Heart right ventricle (tissue), 16 donors: ENCODE measurements at regions of chr4 and their contacts with region 1.

Region 1: DNA sequence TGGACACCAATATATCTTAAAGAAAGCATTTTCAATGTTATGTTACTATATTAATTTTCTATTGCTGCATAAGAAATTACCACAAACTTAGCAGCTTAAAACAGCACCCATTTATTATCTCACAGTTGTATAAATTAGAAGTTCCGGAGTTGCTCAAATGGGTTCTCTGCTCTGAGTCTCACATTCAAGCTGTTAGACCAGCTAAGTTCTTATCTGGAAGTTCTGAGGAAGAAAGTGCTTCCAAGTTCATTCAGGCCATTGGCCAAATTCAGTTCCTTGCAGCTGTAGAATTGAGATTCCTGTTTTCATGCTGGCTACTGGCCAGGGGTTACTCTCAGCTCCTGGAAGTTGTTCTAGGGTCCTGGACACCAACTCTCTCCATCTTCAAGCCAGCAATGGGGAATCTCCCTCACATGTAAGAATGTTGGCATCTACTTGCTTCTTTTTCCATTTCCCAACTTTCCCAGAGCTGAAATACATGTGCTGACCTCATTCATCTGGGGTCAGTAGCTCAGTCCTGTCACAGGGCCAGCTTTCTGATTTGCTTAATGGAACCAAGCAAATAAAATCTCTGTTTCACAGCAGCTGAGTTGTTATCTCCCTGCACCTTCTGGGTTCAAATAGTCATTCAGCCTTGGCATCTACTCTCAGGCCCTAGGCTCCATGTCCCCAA is 99.6 kb upstream of the INTU start:
- DNase-seq: peak; percentile 24 to 90
- ATAC-seq: peak; percentile 85 to 99 (median 96)
- H3K4me3 ChIP-seq: no peak overlapping the region
- H3K27ac ChIP-seq: peak overlapping the region in 4 of 10 donors; percentile 13 to 48 (median 24)
- H3K4me1 ChIP-seq: peaks cover 0 to 32% (median 11%) of the 10 kb centered on the region in 9 donors
- H3K27me3 ChIP-seq: no peaks in the 10 kb centered on the region
- CTCF ChIP-seq: no peak

Region 2: DNA sequence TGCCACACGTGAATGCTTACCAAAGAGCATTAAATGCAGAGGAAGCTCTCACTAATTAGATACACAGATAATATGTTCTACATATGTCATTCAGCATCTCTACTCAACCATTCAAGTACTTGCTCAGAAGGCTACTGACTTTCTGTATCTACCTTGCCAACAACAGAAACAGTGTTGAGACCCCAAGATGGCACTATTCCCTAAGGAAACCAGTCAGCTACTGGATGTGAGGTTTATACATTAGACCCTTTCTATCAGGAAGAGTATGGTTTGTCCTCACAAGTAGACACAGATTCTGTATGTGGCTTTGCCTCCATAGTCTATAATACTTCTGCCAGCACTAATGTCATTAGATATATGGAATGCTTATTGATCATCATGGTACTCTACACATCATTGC is 344.3 kb before region 1 on chr4:
- intact Hi-C with region 1: loop called in 2 of 10 experiments (anchors 10 kb)
- DNase-seq: no peak
- ATAC-seq: peak in 1 of 8 donors; percentile 42
- H3K4me3 ChIP-seq: no peak overlapping the region
- H3K27ac ChIP-seq: no peak overlapping the region
- H3K4me1 ChIP-seq: no peaks in the 10 kb centered on the region
- H3K27me3 ChIP-seq: no peaks in the 10 kb centered on the region
- CTCF ChIP-seq: peak in 7 of 9 donors; percentile 8 to 39 (median 17)

Region 3: DNA sequence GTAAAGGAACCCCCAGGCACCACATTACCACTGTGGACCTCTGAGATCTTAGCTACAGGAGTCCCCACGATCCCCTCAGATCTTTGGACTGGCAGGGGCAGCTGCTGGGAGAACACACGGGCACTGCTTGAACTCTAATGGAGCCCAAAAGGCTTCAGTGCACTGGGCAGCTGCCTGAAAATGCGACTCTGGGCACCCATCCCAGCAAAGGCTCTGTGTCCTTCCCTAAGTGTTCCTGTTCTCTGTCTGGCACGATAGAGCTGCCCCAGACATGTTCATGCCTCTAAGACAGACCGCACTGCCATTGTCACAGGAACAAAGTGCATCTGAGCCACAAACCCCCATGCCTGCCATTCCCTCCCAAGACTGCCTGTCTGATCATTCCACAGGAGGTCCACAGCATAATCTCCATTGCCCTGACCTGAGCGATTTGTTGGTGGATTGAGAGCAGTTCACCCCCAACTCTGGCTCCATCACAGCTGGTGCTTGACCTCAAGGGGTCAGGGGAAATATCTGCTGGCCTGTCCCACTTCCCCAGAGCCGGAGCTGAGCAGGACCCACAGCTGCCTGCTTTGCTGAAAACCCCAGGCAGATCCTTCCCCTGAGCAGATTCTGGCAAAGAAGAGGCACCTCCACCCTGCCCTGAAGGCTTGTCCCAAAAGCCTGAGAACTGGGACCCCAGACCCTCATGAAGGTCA is 336.4 kb before region 1 on chr4:
- intact Hi-C with region 1: loop called in 1 of 10 experiments (anchors 10 kb)
- DNase-seq: peak; percentile 36 to 55
- ATAC-seq: peak in 7 of 8 donors; percentile 66 to 100 (median 89)
- H3K4me3 ChIP-seq: no peak overlapping the region
- H3K27ac ChIP-seq: peak overlapping the region in 2 of 10 donors; percentile 26 to 29
- H3K4me1 ChIP-seq: no peaks in the 10 kb centered on the region
- H3K27me3 ChIP-seq: no peaks in the 10 kb centered on the region
- CTCF ChIP-seq: no peak

Region 4: DNA sequence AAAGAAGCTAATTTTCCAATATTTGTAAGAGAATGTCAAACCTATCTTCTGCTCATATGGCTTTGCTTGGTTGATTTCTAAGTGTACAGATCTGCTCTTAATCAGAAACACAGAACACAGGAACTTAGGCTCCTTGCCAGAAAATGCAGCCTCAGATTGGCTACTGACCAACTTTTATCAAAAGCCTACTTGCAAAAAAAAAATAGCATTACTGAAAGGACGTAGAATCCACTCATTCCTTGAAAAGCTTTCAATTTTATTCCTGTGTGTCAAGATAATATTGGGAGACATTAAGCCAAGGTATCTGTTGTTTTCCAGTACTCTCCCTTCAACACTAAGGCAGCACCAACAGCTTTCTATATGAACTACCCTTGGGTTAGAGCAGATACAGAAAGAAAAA is 28.0 kb before region 1 on chr4:
- intact Hi-C with region 1: no loop called
- DNase-seq: peak in 1 of 2 donors; percentile 37
- ATAC-seq: peak in 3 of 8 donors; percentile 39 to 44 (median 41)
- H3K4me3 ChIP-seq: no peak overlapping the region
- H3K27ac ChIP-seq: no peak overlapping the region
- H3K4me1 ChIP-seq: peaks cover 0 to 37% (median 22%) of the 10 kb centered on the region in 9 donors
- H3K27me3 ChIP-seq: no peaks in the 10 kb centered on the region
- CTCF ChIP-seq: no peak

Region 5: GRCh38 chr4:128123036-128123435 is 589.9 kb after region 1 on chr4:
- intact Hi-C with region 1: no loop called
- DNase-seq: no peak
- ATAC-seq: no peak
- H3K4me3 ChIP-seq: no peak overlapping the region
- H3K27ac ChIP-seq: no peak overlapping the region
- H3K4me1 ChIP-seq: no peaks in the 10 kb centered on the region
- H3K27me3 ChIP-seq: no peaks in the 10 kb centered on the region
- CTCF ChIP-seq: no peak